ENCODE measurements at regions of chr3 and their contacts with region 1.

Region 1: GRCh38 chr3:187738331-187739093 is 6.8 kb downstream of the BCL6 start:
- DNase-seq: peak; percentile 92 to 97
- H3K4me3 ChIP-seq: peak overlapping the region; percentile 54
- CTCF ChIP-seq: peak in 1 of 3 donors; percentile 63
- POLR2A ChIP-seq: peak in 1 of 2 donors; percentile 16

Region 2: DNA sequence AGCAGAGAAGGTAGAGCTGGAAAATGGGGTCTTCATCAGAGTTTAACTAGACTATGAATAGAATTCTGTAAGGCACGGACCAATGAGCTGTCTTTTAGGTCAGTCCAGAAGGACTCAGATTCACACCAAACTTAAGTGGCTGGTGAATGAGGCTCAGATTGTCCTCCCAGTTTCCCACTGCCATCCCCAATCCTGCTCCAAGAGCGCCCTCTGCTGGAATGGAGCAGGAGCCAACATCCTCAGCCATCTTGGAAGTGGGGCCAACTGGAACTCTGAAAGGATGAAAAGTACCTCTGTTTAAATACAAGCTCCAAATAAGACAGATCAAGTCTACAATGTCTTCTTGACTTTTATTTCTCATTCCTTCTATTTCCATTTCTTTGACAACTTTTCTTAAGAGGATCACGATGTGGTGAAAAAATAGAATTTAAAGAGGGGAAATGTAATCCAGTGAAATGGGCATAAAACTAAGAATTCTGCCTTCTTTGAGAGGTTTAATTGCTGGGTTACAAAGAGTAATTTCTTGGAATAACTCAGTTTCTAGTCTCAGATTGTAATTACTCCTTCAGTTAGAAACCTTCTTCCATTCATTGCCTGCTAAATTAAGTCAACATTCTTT is 1216.2 kb after region 1 on chr3:
- intact Hi-C with region 1: loop called (anchors 5 kb)
- DNase-seq: peak; percentile 82 to 95
- H3K4me3 ChIP-seq: no peak overlapping the region
- CTCF ChIP-seq: peak in 1 of 3 donors; percentile 60
- POLR2A ChIP-seq: no peak

Region 3: GRCh38 chr3:189148081-189148507 is 1409.6 kb after region 1 on chr3:
- intact Hi-C with region 1: loop called (anchors 5 kb)
- DNase-seq: peak; percentile 69 to 90
- H3K4me3 ChIP-seq: no peak overlapping the region
- CTCF ChIP-seq: peak in 1 of 3 donors; percentile 29
- POLR2A ChIP-seq: no peak